ENCODE measurements at regions of chr3 and their contacts with region 1.

Region 1: GRCh38 chr3:44198284-44199269 is 43.1 kb upstream of the TOPAZ1 start:
- DNase-seq: peak; percentile 63 to 79
- H3K4me3 ChIP-seq: no peak overlapping the region
- H3K4me3 Mint-ChIP-seq: no peak overlapping the region
- H3K27ac Mint-ChIP-seq: no peak overlapping the region
- H3K4me1 ChIP-seq: peaks cover 10% of the 10 kb centered on the region; the same call in 1 of the 2 replicates
- H3K4me1 Mint-ChIP-seq: no peaks in the 10 kb centered on the region
- H3K27me3 ChIP-seq: no peaks in the 10 kb centered on the region
- H3K27me3 Mint-ChIP-seq: no peaks in the 10 kb centered on the region
- CTCF ChIP-seq: peak; percentile 78 to 82

Region 2: GRCh38 chr3:43769471-43770425 is 428.8 kb before region 1 on chr3:
- CTCF ChIA-PET with region 1: no interaction called
- POLR2A ChIA-PET with region 1: no interaction called
- intact Hi-C with region 1: loop called (anchors 2 kb)
- DNase-seq: peak; percentile 83 to 91
- H3K4me3 ChIP-seq: no peak overlapping the region
- H3K4me3 Mint-ChIP-seq: peak overlapping the region; percentile 46
- H3K27ac Mint-ChIP-seq: peak overlapping the region; percentile 24
- H3K4me1 ChIP-seq: 0 out of 2 replicates have a peak, but pooled peaks cover 7% of the 10 kb centered on the region
- H3K4me1 Mint-ChIP-seq: no peaks in the 10 kb centered on the region
- H3K27me3 ChIP-seq: no peaks in the 10 kb centered on the region
- H3K27me3 Mint-ChIP-seq: no peaks in the 10 kb centered on the region
- CTCF ChIP-seq: peak; percentile 76 to 86

Region 3: DNA sequence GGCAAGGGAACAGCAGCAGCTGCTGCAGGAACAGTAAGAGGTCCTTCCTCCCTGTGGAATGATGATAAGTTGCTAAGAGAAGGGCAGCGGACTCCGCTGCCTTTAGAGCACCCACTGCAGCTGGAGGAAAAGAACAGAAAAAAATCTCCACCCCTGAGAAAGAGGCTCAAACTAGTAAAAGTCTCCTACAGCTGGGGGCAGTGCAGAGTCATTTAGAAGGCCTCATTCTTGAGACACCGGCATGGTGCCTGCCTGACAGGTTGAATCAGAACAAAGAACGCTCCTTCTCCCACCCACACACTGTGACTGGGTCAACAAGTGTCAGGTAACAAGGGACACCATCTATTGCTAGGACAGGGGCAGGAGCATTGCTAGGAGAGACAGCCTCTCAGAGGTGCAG is 319.4 kb before region 1 on chr3:
- CTCF ChIA-PET with region 1: no interaction called
- POLR2A ChIA-PET with region 1: no interaction called
- intact Hi-C with region 1: loop called (anchors 1 kb)
- DNase-seq: peak; percentile 51 to 57
- H3K4me3 ChIP-seq: no peak overlapping the region
- H3K4me3 Mint-ChIP-seq: no peak overlapping the region
- H3K27ac Mint-ChIP-seq: no peak overlapping the region
- H3K4me1 ChIP-seq: no peaks in the 10 kb centered on the region
- H3K4me1 Mint-ChIP-seq: peaks cover 9% of the 10 kb centered on the region
- H3K27me3 ChIP-seq: no peaks in the 10 kb centered on the region
- H3K27me3 Mint-ChIP-seq: peaks cover 3% of the 10 kb centered on the region
- CTCF ChIP-seq: peak; percentile 23 to 54

Region 4: GRCh38 chr3:44065311-44066094 is 133.1 kb before region 1 on chr3:
- CTCF ChIA-PET with region 1: no interaction called
- POLR2A ChIA-PET with region 1: no interaction called
- intact Hi-C with region 1: loop called (anchors 1 kb)
- DNase-seq: no peak
- H3K4me3 ChIP-seq: no peak overlapping the region
- H3K4me3 Mint-ChIP-seq: no peak overlapping the region
- H3K27ac Mint-ChIP-seq: no peak overlapping the region
- H3K4me1 ChIP-seq: no peaks in the 10 kb centered on the region
- H3K4me1 Mint-ChIP-seq: no peaks in the 10 kb centered on the region
- H3K27me3 ChIP-seq: no peaks in the 10 kb centered on the region
- H3K27me3 Mint-ChIP-seq: peaks cover 10% of the 10 kb centered on the region
- CTCF ChIP-seq: peak in 1 of 2 experiments; percentile 2

Measured in Caco-2 (cell line).